Caco-2 (cell line): ENCODE measurements at regions of chr16 and their contacts with region 1.

Region 1: GRCh38 chr16:72876221-72876620 is 171.7 kb downstream of the ZFHX3 start:
- DNase-seq: no peak
- H3K4me3 ChIP-seq: no peak overlapping the region
- H3K4me3 Mint-ChIP-seq: peak overlapping the region; percentile 73
- H3K27ac Mint-ChIP-seq: peak overlapping the region; percentile 100
- H3K4me1 ChIP-seq: peaks cover 50% of the 10 kb centered on the region
- H3K4me1 Mint-ChIP-seq: peaks cover 58% of the 10 kb centered on the region
- H3K27me3 ChIP-seq: no peaks in the 10 kb centered on the region
- H3K27me3 Mint-ChIP-seq: no peaks in the 10 kb centered on the region
- CTCF ChIP-seq: no peak

Region 2: GRCh38 chr16:72913377-72914096 is 37.3 kb after region 1 on chr16:
- CTCF ChIA-PET with region 1: no interaction called
- POLR2A ChIA-PET with region 1: no interaction called
- intact Hi-C with region 1: loop called (anchors 5 kb)
- DNase-seq: no peak
- H3K4me3 ChIP-seq: no peak overlapping the region
- H3K4me3 Mint-ChIP-seq: no peak overlapping the region
- H3K27ac Mint-ChIP-seq: peak overlapping the region; percentile 43
- H3K4me1 ChIP-seq: peaks cover 18% of the 10 kb centered on the region
- H3K4me1 Mint-ChIP-seq: peaks cover 23% of the 10 kb centered on the region
- H3K27me3 ChIP-seq: no peaks in the 10 kb centered on the region
- H3K27me3 Mint-ChIP-seq: no peaks in the 10 kb centered on the region
- CTCF ChIP-seq: no peak

Region 3: GRCh38 chr16:72938795-72939164 is 62.6 kb after region 1 on chr16:
- CTCF ChIA-PET with region 1: no interaction called
- POLR2A ChIA-PET with region 1: interaction called, 6 read pairs
- intact Hi-C with region 1: loop called (anchors 1 kb)
- DNase-seq: no peak
- H3K4me3 ChIP-seq: no peak overlapping the region
- H3K4me3 Mint-ChIP-seq: no peak overlapping the region
- H3K27ac Mint-ChIP-seq: peak overlapping the region; percentile 76
- H3K4me1 ChIP-seq: peaks cover 66% of the 10 kb centered on the region
- H3K4me1 Mint-ChIP-seq: peaks cover 58% of the 10 kb centered on the region
- H3K27me3 ChIP-seq: no peaks in the 10 kb centered on the region
- H3K27me3 Mint-ChIP-seq: no peaks in the 10 kb centered on the region
- CTCF ChIP-seq: no peak